ENCODE measurements at regions of chr13 and their contacts with region 1.

Region 1: DNA sequence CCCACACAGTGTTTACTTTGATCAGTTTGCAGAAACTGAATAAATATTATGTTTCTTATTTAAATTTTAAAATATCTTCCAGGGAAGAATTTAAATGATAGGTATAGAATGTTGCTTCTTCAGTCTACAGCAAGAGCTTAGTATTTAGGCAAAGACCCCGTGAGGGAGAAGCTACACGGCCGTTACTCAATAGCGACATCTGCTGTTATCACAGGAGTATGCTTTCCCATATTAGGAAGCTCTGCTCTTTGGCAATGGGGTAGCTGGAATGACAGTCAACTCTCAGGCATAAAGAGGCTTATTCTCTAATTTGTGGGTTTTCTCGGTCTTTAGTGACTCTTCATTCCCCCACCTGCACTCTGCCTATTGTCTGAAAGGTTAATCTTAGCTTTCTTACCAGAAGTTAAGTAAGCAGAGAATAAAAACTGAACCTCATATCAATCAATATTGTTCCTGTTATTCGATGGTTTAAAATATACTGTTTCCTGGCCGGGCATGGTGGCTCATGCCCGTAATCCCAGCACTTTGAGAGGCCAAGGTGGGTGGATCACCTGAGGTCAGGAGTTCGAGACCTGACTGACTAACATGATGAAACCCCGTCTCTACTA is 13.2 kb upstream of the LHFPL6 start:
- ATAC-seq: peak; percentile 63 to 91 (median 77)
- H3K4me3 ChIP-seq: no peak overlapping the region
- H3K27ac ChIP-seq: no peak overlapping the region
- H3K4me1 ChIP-seq: no peaks in the 10 kb centered on the region

Region 2: GRCh38 chr13:39051157-39051556 is 565.0 kb before region 1 on chr13:
- in situ Hi-C with region 1: loop called in 4 of 9 experiments (anchors 10 to 25 kb)
- ATAC-seq: peak in 2 of 8 experiments; percentile 29 to 57
- H3K4me3 ChIP-seq: no peak overlapping the region
- H3K27ac ChIP-seq: no peak overlapping the region
- H3K4me1 ChIP-seq: peaks cover 0 to 2% of the 10 kb centered on the region in 2 donors

Region 3: GRCh38 chr13:39144941-39145533 is 471.2 kb before region 1 on chr13:
- in situ Hi-C with region 1: loop called in 8 of 9 experiments (anchors 10 to 25 kb)
- ATAC-seq: peak in 6 of 8 experiments; percentile 37 to 79 (median 45)
- H3K4me3 ChIP-seq: no peak overlapping the region
- H3K27ac ChIP-seq: no peak overlapping the region
- H3K4me1 ChIP-seq: no peaks in the 10 kb centered on the region

Region 4: GRCh38 chr13:39263033-39263432 is 353.2 kb before region 1 on chr13:
- in situ Hi-C with region 1: loop called in 3 of 9 experiments (anchors 10 to 25 kb)
- ATAC-seq: peak in 7 of 8 experiments; percentile 44 to 94 (median 77)
- H3K4me3 ChIP-seq: no peak overlapping the region
- H3K27ac ChIP-seq: no peak overlapping the region
- H3K4me1 ChIP-seq: peaks cover 0 to 5% of the 10 kb centered on the region in 2 donors

Region 5: DNA sequence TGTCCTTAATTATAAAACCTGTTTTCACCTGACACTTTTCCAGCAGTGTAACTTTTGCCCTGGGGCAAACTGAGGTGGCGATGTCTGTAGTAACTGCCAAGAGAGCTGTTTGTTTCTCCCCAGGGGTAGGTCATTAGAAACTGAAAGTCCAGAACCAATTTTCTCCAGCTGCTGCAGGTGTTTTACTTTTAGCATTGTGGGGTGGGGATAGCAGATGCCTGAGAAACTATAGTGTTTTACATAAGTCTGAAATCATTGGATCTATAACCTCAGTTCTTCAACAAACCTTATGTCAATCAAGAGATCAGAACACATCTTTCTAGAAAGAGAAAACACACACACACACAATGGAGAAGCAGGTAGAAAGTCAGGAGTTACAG is 105.9 kb before region 1 on chr13:
- in situ Hi-C with region 1: no loop called
- ATAC-seq: no peak
- H3K4me3 ChIP-seq: no peak overlapping the region
- H3K27ac ChIP-seq: no peak overlapping the region
- H3K4me1 ChIP-seq: peaks cover 10 to 16% of the 10 kb centered on the region in 2 donors

Measured in motor neuron (in vitro differentiated cells).